ENCODE measurements at regions of chr3 and their contacts with region 1.

Region 1: DNA sequence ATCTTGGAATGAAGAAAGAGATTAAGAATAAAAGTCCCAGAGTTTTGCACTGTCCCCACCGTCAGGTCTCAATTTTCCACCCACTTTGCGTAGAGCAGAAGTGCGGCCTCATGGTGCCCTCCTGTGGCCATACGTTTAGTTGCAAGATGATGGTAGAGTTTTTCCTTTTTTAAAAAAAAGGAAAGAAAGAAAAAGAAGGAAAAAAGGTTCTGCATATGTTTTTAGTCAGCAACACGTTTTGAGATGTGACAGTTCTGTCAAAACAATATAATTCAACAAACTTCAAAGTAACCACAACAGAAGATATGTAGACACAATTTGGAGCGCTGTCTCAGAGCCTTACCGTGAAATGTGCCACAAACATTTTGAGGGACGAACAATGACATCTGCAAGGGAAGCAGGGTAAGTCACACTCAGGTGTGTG is 24.6 kb downstream of the EBLN2 start:
- DNase-seq: peak; percentile 84
- H3K4me3 Mint-ChIP-seq: no peak overlapping the region
- H3K27ac Mint-ChIP-seq: no peak overlapping the region
- H3K4me1 Mint-ChIP-seq: peaks cover 8% of the 10 kb centered on the region
- H3K27me3 Mint-ChIP-seq: peaks cover 7% of the 10 kb centered on the region

Region 2: DNA sequence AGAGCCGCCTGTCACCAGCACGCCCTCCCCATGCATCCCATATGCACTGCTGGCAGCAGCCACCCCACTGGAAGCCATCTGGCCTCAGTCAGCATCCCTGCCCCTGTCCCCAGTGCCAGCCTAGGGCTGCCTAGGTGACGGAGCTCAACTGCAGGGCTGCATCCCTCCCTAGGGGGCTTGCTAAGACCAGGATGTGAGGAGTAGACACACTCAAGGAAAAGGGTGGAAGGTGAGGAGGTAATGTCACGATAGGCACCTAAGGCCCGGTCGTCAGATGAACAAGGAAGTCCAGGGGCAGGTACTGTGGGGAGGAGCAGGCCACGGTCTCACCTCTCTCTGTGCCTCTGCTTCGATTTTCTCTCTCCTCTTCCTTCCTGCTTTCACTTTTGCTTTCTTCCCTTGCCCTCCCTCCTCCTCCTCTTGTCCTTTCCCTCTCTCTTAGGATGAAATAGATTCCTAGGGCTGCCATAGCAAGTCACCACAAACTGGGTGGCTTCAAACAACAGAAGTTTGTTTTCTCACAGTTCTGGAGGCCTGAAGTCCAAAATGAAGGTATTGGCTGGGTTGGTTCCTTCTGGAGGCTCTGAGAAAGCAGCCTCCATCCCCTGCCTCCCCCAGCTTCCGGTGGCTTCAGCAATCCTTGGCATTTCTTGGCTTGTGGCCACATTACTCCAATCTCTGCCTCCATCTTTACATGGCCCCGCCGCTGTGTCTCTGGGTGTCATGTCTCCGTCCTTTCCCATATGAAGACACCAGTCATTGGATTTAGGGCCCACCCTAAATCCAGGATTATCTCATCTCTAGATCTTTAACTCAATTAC is 536.1 kb before region 1 on chr3:
- intact Hi-C with region 1: no loop called
- DNase-seq: peak; percentile 76
- H3K4me3 Mint-ChIP-seq: peak overlapping the region; percentile 83
- H3K27ac Mint-ChIP-seq: peak overlapping the region; percentile 94
- H3K4me1 Mint-ChIP-seq: peaks cover 18% of the 10 kb centered on the region
- H3K27me3 Mint-ChIP-seq: no peaks in the 10 kb centered on the region

Region 3: DNA sequence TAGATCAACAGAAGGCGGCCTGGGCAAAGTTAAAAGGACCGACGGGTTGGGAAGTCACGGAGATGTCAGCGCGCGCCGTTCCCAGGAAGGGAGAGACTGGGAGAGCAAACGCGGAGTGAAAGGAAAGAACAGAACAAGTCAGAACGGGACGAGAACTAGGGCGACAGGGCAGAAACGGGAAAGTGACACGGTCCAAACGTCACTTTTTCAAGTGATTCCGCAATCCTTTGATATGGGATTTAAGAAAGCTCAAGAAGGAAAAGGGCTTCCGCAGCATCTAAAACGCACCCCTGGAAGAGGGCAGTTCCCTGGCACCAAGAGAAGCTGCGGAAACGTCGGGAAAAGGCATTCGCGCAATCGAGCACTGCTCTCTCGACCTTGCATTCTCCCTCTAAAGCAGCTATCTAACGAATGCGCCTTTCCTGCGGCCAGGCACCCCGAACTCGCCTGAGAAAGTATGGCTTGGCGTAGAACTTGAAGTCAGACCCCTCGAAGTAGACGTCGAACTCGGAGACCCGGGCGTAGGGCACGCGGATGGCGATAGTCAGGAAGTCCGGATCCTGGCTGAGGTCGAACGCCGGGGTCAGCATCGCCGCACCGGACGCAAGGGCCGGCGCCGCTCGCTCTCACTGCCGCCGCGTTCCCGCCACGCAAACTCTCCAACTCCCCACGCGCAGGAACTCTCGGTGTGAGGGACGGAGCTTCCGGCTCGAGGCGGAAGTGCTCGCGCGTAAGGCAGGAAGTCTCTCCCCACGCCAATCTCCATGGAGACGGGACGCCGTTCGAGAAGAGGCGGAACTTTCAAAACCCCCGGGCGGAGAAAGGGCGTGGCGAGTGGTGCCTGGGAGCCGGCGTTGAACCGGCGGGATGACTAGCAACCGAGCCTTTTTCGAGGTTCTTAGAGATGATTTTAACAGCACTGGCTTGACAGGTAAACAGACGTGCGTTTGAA is 238.1 kb before region 1 on chr3 and contains the start of gene SHQ1:
- intact Hi-C with region 1: loop called (anchors 1 kb)
- DNase-seq: peak; percentile 99
- H3K4me3 Mint-ChIP-seq: peak within 1 kb of the TSS; percentile 93
- H3K27ac Mint-ChIP-seq: peak within 1 kb of the TSS; percentile 91
- H3K4me1 Mint-ChIP-seq: peaks cover 41% of the 10 kb centered on the region
- H3K27me3 Mint-ChIP-seq: no peaks in the 10 kb centered on the region
- total RNA-seq, gene SHQ1: 46.8 and 47.2 TPM in 2 replicates

Region 4: DNA sequence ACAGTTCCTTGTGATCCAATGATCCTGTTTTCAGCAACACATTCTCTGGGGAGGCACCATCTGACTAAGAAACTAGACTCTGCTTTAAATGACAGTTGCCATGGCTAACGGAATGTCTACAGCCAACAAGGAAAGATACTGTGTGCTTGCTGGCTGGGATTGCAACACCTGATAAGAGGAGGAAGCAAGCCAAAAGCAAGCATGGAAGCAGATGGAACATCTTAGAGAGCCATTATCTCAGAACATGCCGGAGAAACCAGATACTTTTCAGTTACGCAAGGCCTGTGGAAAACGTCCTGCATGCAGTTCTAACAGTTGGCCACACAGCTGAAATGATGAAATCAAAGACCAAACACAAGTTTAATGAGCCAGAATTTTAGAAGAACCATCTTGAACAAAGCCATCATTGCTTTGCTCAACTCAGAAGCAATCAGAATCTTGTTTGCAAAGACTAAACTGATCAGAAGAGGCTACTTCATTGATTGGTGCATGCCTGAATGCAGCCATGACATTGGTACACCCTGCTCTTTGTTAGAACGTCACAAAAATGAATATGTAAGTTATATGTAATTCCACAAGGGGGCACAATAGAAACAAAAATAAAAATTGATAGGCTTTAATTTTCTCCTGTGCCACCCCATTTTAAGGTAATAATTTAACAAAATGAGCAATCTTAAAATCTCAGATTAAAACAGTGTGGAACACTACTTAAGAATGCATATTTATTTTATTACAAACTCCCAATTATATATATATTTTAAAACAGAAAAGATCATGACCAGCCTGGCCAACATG is 147.4 kb before region 1 on chr3:
- intact Hi-C with region 1: loop called (anchors 1 kb)
- DNase-seq: peak; percentile 75
- H3K4me3 Mint-ChIP-seq: no peak overlapping the region
- H3K27ac Mint-ChIP-seq: no peak overlapping the region
- H3K4me1 Mint-ChIP-seq: no peaks in the 10 kb centered on the region
- H3K27me3 Mint-ChIP-seq: peaks cover 20% of the 10 kb centered on the region

Region 5: DNA sequence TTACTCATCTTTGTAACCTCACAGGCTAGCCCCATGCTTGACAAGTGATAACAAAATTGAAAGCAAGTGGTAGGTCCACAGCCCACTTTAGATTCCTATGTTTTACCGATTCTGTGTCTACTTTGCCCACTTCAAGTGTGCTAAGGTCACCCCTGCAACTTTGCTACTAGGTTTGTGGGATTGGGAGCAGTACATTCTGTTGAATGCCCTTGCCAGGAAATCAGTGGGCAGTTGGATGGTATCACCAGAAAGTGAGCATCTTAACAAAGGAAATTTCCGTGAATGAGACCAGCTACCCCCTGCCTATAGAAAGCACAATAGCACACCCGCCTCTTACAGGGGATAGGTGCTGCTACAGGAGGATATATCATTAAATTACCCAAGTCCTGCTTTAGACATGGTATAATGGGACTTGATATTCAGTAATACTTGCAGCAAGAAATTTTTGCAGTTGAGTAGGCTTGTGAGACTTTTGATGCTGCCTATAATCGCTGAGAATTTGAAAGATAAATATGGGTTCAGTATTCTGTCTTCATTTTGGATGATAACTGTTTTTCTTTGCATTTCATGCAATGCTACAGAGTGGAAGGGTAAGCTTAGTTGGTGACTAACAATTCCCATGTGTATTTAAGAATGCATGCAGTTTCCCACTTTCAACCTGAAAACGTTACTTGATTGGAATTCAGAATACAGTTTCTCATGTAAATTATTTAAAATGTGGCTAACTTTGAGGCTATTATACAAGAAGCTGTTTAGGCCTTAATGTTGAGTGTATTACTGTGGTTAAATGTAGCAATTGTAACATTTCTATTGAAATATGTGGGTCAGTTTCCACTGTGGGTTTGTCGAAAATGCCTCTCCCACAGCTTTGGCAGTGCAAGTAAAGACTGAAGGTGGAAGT is 15.2 kb before region 1 on chr3:
- intact Hi-C with region 1: no loop called
- DNase-seq: peak; percentile 55
- H3K4me3 Mint-ChIP-seq: no peak overlapping the region
- H3K27ac Mint-ChIP-seq: no peak overlapping the region
- H3K4me1 Mint-ChIP-seq: peaks cover 22% of the 10 kb centered on the region
- H3K27me3 Mint-ChIP-seq: no peaks in the 10 kb centered on the region

Region 6: DNA sequence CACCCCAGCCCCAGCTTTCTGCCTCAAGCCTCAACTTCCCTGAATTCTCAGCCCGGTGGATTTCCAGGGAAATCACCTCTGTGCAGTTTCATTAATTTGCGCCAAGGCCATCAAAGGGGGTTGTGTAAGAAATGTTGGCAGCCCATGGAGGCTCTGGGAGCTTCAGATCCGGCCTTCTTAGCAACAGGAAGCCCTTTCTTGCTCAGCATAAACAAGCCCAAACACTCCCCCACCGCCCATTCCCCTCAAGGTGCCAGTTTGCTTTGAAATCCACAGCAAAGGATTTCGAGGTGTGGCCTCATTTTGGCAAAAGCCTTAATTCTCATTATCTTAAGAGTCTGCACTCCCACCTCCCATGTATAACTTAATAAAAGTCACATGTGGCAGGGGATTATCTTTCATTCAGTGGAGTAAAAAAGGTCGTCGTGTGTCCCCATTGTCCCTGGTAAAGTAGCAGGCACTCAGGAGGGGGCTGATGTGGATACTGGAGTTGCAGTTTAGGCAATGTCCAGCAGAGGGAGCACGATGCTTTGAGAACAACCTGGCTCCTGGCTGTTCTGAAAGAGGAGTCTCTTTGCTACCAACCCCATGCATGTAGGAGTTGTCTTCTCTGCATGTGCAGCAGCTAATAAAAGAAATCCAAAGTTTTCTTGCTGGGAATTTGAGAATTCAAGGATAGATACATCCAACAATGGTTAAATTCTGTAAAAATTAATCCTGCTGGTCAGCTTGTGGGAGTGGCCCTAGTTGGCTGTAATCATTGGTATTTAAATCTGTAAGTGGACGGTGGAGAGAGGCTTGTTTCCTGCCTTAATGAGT is 14.9 kb after region 1 on chr3:
- intact Hi-C with region 1: no loop called
- DNase-seq: peak; percentile 92
- H3K4me3 Mint-ChIP-seq: no peak overlapping the region
- H3K27ac Mint-ChIP-seq: no peak overlapping the region
- H3K4me1 Mint-ChIP-seq: no peaks in the 10 kb centered on the region
- H3K27me3 Mint-ChIP-seq: no peaks in the 10 kb centered on the region